IMR-90 (cell line): ENCODE measurements at regions of chr12 and their contacts with region 1.

Region 1: DNA sequence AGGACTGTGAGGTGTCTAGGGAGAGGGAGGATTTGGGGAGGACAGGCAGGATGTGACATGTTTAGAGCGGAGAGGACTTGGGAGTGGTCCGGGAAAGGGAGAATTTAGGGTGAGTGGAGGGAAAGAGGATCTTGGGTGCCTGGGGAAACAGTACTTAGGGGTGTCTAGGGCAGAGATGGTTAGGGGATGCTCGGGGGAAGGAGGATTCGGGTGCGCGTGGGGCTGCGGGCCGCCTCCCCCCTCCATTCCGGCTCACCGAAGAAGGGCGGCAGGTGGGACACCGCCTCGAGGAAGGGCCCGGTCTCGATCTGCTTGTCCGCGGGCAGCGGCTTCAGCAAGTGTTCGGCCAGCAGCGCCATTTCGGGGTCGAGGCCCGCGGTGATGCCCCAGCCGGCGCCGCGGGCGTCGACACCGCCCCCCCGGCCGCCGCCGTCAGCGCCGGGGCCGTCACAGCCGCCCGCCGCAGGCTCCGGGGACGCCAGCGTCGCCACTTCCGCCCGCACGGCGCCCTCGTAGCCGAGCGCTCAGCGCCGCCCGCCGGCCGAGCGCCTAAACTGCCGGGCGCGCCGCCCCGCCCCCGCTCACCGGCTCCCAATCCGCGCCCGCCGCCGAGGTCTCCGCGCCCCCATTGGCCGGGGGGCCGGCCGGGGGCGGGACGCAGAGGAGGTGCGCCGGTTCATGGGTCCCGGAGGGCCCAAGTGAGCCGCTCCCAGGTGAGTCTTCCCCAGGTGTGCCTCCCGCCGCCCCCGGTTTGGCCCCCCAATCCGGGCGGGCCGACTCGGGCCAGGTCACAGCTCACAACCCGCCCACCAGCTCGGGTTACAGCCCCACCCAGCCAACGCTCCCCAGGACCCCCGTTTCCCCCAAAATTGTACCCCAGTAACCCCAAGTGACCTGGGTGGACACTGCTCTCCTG is at the start of gene GLTP:
- DNase-seq: peak; percentile 63
- ATAC-seq: peak; percentile 99
- H3K4me3 ChIP-seq: peak within 1 kb of the TSS; percentile 76
- H3K27ac ChIP-seq: peak within 1 kb of the TSS; percentile 71
- H3K4me1 ChIP-seq: peaks cover 10% of the 10 kb centered on the region
- H3K27me3 ChIP-seq: no peaks in the 10 kb centered on the region
- CTCF ChIP-seq: peak; percentile 89
- POLR2A ChIP-seq: no peak
- RAD21 ChIP-seq: peak; percentile 80
- total RNA-seq, gene GLTP: 58.4 and 67.2 TPM in 2 replicates

Region 2: DNA sequence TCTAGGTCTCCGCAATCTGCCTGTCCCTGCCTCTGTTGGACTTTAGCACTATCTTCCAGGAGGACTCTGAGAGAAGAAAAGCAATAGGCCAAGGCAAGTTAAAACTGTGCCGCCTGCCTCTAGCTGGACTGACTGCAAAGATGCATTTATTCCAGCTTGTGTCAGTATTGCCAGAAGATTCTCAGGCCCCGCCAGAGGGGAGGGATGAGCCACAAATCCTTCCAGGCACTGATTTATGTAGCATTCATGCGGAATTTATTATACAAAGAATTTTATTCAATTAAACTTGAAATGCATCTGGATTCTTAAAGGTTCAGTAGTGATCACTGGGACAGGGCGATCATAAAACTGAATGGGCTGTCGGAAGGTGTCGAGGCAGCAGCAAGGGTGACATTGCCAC is 326.8 kb before region 1 on chr12:
- CTCF ChIA-PET with region 1: no interaction called
- POLR2A ChIA-PET with region 1: no interaction called
- dilution Hi-C with region 1: no loop called
- in situ Hi-C with region 1: no loop called
- intact Hi-C with region 1: no loop called
- DNase-seq: no peak
- ATAC-seq: no peak
- H3K4me3 ChIP-seq: no peak overlapping the region
- H3K27ac ChIP-seq: no peak overlapping the region
- H3K4me1 ChIP-seq: no peaks in the 10 kb centered on the region
- H3K27me3 ChIP-seq: peaks cover 35% of the 10 kb centered on the region
- CTCF ChIP-seq: no peak
- POLR2A ChIP-seq: no peak
- RAD21 ChIP-seq: no peak

Region 3: DNA sequence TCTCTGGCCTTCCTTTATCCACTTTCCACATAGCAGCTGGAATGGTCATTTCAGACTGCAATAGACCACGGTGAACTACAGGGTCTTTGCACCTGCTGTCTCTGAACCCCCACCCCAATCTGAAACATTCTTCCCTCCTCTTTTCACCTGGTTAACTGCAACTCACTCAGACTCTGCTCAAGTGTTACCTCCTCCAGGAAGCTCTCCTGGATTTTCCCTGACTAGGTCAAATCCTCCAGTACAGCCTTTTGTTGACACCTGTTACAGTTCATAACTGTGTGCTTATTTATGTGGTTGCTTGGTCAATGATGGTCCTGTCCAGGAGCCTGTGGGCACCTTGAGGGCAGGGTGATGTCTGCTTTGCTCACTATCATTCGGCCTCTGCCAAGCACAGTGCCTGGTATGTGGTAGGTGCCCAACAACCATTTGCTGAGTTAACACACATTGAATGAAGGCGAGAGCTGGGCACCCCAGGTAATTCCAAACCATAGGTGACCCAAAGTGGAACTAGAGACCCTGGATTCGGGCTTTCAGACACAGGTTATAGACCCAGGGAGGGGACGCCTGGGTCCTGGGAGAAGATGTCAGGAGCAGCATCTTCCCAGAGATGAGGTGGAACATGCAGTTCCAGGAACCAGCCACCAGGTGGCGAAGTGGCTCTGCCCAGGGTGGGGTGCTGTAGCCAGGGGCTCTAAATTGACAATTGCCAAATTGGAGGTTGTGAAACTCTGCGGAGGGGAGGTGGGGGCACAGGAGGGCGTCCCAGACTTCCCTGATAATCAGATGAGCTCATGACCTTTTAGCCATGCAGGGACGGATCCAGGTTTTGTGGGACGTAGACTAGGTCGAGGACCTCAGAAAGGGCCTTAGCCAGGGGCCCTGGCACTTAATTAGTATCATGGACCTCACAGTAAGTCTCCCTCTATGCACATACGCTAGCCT is 75.2 kb before region 1 on chr12:
- CTCF ChIA-PET with region 1: no interaction called
- POLR2A ChIA-PET with region 1: no interaction called
- dilution Hi-C with region 1: no loop called
- in situ Hi-C with region 1: no loop called
- intact Hi-C with region 1: loop called (anchors 1 kb)
- DNase-seq: peak; percentile 39
- ATAC-seq: peak; percentile 99
- H3K4me3 ChIP-seq: no peak overlapping the region
- H3K27ac ChIP-seq: no peak overlapping the region
- H3K4me1 ChIP-seq: no peaks in the 10 kb centered on the region
- H3K27me3 ChIP-seq: no peaks in the 10 kb centered on the region
- CTCF ChIP-seq: peak; percentile 89
- POLR2A ChIP-seq: no peak
- RAD21 ChIP-seq: peak; percentile 86

Region 4: GRCh38 chr12:109858764-109859163 is 21.5 kb before region 1 on chr12:
- CTCF ChIA-PET with region 1: interaction called, 3 read pairs
- POLR2A ChIA-PET with region 1: no interaction called
- dilution Hi-C with region 1: no loop called
- in situ Hi-C with region 1: no loop called
- intact Hi-C with region 1: loop called (anchors 1 kb)
- DNase-seq: peak; percentile 28
- ATAC-seq: peak; percentile 59
- H3K4me3 ChIP-seq: no peak overlapping the region
- H3K27ac ChIP-seq: no peak overlapping the region
- H3K4me1 ChIP-seq: peaks cover 3% of the 10 kb centered on the region
- H3K27me3 ChIP-seq: no peaks in the 10 kb centered on the region
- CTCF ChIP-seq: no peak
- POLR2A ChIP-seq: no peak
- RAD21 ChIP-seq: no peak

Region 5: DNA sequence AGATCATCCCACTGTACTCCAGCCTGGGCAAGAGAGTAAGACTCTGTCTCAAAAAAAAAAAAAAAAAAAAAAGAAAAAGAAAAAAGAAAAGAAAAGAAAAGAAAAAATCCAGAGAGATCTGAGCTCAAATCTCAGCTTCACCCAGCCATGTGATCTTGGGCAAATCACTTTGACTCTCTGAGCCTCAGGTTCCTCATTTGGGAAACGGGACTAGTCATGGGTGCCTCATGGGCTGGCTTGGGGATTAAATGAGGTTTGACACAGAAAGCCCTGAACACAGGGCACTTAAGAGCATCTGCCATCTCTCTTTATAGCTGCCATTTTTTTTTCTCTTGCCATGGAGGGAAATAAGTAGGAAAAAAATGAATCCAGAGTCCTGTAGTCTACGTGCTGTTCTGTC is 1126.3 kb after region 1 on chr12:
- CTCF ChIA-PET with region 1: no interaction called
- POLR2A ChIA-PET with region 1: no interaction called
- dilution Hi-C with region 1: no loop called
- in situ Hi-C with region 1: no loop called
- intact Hi-C with region 1: no loop called
- DNase-seq: no peak
- ATAC-seq: no peak
- H3K4me3 ChIP-seq: no peak overlapping the region
- H3K27ac ChIP-seq: no peak overlapping the region
- H3K4me1 ChIP-seq: no peaks in the 10 kb centered on the region
- H3K27me3 ChIP-seq: no peaks in the 10 kb centered on the region
- CTCF ChIP-seq: no peak
- POLR2A ChIP-seq: no peak
- RAD21 ChIP-seq: no peak